SK-N-SH (cell line): ENCODE measurements at regions of chr7 and their contacts with region 1.

Region 1: GRCh38 chr7:133820584-133820983 is 306.6 kb upstream of the LRGUK start:
- DNase-seq: peak; percentile 41
- H3K4me3 ChIP-seq: no peak overlapping the region
- H3K27ac ChIP-seq: peak overlapping the region in 1 of 2 experiments; percentile 93; a peak in 2 of 4 replicates
- H3K4me1 ChIP-seq: peaks cover 0 to 38% of the 10 kb centered on the region in 2 experiments; a peak in 3 of 4 replicates
- H3K27me3 ChIP-seq: no peaks in the 10 kb centered on the region
- CTCF ChIP-seq: no peak
- EP300 ChIP-seq: no peak; a peak in 1 of 4 replicates
- RAD21 ChIP-seq: peak; percentile 27; the same call in 1 of the 2 replicates

Region 2: GRCh38 chr7:133837224-133837623 is 16.6 kb after region 1 on chr7:
- CTCF ChIA-PET with region 1: interaction called, 11 read pairs
- POLR2A ChIA-PET with region 1: interaction called, 3 read pairs
- DNase-seq: peak; percentile 57
- H3K4me3 ChIP-seq: no peak overlapping the region
- H3K27ac ChIP-seq: peak overlapping the region; percentile 12 to 100; a peak in 3 of 4 replicates
- H3K4me1 ChIP-seq: peaks cover 0 to 50% of the 10 kb centered on the region in 2 experiments; a peak in 2 of 4 replicates
- H3K27me3 ChIP-seq: no peaks in the 10 kb centered on the region
- CTCF ChIP-seq: no peak
- EP300 ChIP-seq: peak in 1 of 2 experiments; percentile 94; a peak in 2 of 4 replicates
- RAD21 ChIP-seq: peak; percentile 33; the same call in 1 of the 2 replicates